CD8-positive, alpha-beta T cell (primary cell): ENCODE measurements at regions of chr12 and their contacts with region 1.

Region 1: DNA sequence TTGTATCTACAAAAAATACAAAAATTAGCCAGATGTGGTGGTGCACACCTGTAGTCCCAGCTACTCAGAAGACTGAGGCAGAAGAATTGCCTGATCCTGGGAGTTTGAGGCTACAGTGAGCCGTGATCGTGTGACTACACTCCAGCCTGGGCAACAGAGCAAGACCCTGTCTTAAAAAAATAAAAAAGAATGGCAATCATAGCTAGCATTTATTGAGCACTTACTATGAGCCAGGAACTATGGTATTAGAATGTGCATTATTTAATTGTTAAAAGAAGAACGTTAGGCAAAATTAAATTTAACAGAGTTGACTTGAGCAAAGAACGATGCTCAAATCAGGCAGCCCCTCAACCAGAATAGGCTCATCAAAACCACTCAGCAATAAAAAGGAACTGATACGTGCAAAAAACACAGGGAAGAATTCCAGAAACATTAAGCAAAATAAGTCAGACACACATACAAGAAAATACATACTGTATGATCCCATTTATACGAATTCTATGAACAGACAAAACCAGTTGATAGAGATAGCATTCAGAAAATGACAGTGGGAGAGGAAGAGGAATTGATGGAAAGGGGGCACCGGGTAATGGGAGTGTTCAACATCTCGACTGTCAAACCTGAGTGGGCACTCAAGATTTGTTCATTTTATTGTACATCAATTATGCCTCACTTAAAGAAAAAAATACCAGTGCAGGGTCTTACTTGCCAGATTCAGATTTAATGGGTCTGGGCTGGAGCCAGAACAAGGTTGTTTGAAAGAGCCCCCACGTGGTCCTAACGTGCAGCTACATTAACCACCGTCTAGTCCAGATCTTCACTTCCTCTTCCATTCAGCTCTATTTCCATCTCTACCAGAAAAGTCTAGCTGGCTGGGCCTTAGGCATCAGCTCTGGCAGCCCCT is 8.0 kb downstream of the SCNN1A start:
- DNase-seq: peak in 7 of 9 experiments; percentile 34 to 81 (median 54)
- ATAC-seq: peak; percentile 66
- H3K4me3 ChIP-seq: no peak overlapping the region
- H3K4me3 Mint-ChIP-seq: peak overlapping the region; percentile 26
- H3K27ac ChIP-seq: peak overlapping the region in 1 of 2 experiments; percentile 51
- H3K27ac Mint-ChIP-seq: peak overlapping the region; percentile 69
- H3K4me1 ChIP-seq: peaks cover 25% of the 10 kb centered on the region
- H3K4me1 Mint-ChIP-seq: peaks cover 37% of the 10 kb centered on the region
- H3K27me3 ChIP-seq: no peaks in the 10 kb centered on the region
- H3K27me3 Mint-ChIP-seq: no peaks in the 10 kb centered on the region
- CTCF ChIP-seq: no peak

Region 2: GRCh38 chr12:6355491-6356371 is 11.6 kb before region 1 on chr12:
- CTCF ChIA-PET with region 1: interaction called, 18 read pairs
- POLR2A ChIA-PET with region 1: interaction called, 5 read pairs
- intact Hi-C with region 1: no loop called
- DNase-seq: no peak
- ATAC-seq: no peak
- H3K4me3 ChIP-seq: no peak overlapping the region
- H3K4me3 Mint-ChIP-seq: no peak overlapping the region
- H3K27ac ChIP-seq: no peak overlapping the region
- H3K27ac Mint-ChIP-seq: no peak overlapping the region
- H3K4me1 ChIP-seq: peaks cover 2% of the 10 kb centered on the region
- H3K4me1 Mint-ChIP-seq: peaks cover 17% of the 10 kb centered on the region
- H3K27me3 ChIP-seq: no peaks in the 10 kb centered on the region
- H3K27me3 Mint-ChIP-seq: no peaks in the 10 kb centered on the region
- CTCF ChIP-seq: no peak

Region 3: GRCh38 chr12:6380141-6381121 is 13.1 kb after region 1 on chr12:
- CTCF ChIA-PET with region 1: interaction called, 11 read pairs
- POLR2A ChIA-PET with region 1: no interaction called
- intact Hi-C with region 1: no loop called
- DNase-seq: no peak
- ATAC-seq: no peak
- H3K4me3 ChIP-seq: no peak overlapping the region
- H3K4me3 Mint-ChIP-seq: no peak overlapping the region
- H3K27ac ChIP-seq: no peak overlapping the region
- H3K27ac Mint-ChIP-seq: no peak overlapping the region
- H3K4me1 ChIP-seq: peaks cover 28% of the 10 kb centered on the region
- H3K4me1 Mint-ChIP-seq: peaks cover 21% of the 10 kb centered on the region
- H3K27me3 ChIP-seq: peaks cover 0 to 12% of the 10 kb centered on the region in 2 experiments
- H3K27me3 Mint-ChIP-seq: peaks cover 22% of the 10 kb centered on the region
- CTCF ChIP-seq: no peak